ENCODE measurements at regions of chr19 and their contacts with region 1.

Region 1: DNA sequence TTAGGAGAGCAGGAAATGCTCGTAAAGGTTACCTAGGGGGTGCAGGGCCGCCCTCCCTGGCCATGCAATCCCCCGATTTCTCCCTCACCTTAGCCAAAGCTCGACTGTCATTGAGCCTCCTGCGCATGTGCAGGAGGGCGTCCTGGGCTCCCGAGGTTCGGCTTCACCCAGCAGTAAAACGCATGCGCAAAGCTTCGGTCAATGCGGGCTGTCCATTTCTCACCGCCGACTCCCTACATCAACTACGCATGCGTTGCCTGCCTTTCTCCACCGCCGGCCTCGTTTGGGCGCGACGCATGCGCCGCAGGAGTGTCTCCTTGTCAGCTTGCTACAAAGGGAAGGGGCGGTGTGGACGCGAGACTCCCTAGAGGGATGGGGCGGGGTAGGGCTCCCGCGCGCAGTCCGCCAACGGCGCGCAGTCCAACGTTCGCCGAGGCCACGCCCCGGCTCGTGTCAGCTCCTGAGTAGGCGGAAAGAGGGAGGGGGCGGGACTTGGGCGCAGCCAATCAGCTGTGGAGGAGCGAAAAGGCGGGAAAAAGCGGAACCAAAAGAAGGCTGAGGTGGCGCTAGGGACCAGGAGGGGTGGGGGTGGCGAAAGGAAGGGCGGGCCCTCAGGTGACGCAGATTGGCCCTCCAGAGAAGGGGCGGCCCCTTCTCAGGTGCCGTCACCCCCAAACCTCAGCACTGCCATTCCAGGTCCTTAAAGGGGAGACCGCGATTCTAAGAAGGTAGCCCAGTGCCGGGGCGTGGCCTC is at the starts of genes SYNGR4 and TMEM143:
- DNase-seq: peak; percentile 100
- H3K4me3 ChIP-seq: peak within 1 kb of the TSS; percentile 46
- H3K27ac ChIP-seq: peak within 1 kb of the TSS; percentile 82
- H3K4me1 ChIP-seq: peaks cover 9% of the 10 kb centered on the region
- H3K27me3 ChIP-seq: no peaks in the 10 kb centered on the region
- CTCF ChIP-seq: no peak
- total RNA-seq, gene SYNGR4: 0.50 TPM in 1 of 2 replicates, not detected in the other
- total RNA-seq, gene TMEM143: 7.5 and 7.9 TPM in 2 replicates

Region 2: GRCh38 chr19:48391107-48391986 is 27.4 kb after region 1 on chr19 and contains the start of gene KDELR1:
- CTCF ChIA-PET with region 1: interaction called, 15 read pairs
- POLR2A ChIA-PET with region 1: no interaction called
- intact Hi-C with region 1: no loop called
- DNase-seq: peak; percentile 79
- H3K4me3 ChIP-seq: peak within 1 kb of the TSS; percentile 100
- H3K27ac ChIP-seq: peak within 1 kb of the TSS; percentile 91
- H3K4me1 ChIP-seq: peaks cover 39% of the 10 kb centered on the region
- H3K27me3 ChIP-seq: no peaks in the 10 kb centered on the region
- CTCF ChIP-seq: peak; percentile 96
- total RNA-seq, gene KDELR1: 197 and 200 TPM in 2 replicates

Region 3: DNA sequence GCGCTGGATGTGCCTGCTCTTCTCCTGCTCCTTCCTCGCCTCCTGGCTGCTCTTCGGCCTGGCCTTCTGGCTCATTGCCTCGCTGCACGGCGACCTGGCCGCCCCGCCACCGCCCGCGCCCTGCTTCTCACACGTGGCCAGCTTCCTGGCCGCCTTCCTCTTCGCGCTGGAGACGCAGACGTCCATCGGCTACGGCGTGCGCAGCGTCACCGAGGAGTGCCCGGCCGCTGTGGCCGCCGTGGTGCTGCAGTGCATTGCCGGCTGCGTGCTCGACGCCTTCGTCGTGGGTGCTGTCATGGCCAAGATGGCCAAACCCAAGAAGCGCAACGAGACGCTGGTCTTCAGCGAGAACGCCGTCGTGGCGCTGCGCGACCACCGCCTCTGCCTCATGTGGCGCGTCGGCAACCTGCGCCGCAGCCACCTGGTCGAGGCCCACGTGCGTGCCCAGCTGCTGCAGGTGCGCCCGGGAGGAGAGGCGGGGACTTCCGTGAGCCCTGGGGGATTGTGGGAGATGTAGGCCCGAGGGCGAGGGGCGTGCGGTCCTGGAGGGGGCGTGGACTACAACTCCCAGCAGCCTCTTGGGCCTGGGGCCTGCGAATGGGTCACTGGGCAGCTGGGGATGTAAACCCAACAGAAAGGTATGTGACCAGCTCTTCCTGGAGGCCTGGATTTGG is 98.1 kb after region 1 on chr19:
- CTCF ChIA-PET with region 1: interaction called, 11 read pairs
- POLR2A ChIA-PET with region 1: no interaction called
- intact Hi-C with region 1: no loop called
- DNase-seq: no peak
- H3K4me3 ChIP-seq: no peak overlapping the region
- H3K27ac ChIP-seq: no peak overlapping the region
- H3K4me1 ChIP-seq: peaks cover 3% of the 10 kb centered on the region
- H3K27me3 ChIP-seq: no peaks in the 10 kb centered on the region
- CTCF ChIP-seq: no peak

Region 4: DNA sequence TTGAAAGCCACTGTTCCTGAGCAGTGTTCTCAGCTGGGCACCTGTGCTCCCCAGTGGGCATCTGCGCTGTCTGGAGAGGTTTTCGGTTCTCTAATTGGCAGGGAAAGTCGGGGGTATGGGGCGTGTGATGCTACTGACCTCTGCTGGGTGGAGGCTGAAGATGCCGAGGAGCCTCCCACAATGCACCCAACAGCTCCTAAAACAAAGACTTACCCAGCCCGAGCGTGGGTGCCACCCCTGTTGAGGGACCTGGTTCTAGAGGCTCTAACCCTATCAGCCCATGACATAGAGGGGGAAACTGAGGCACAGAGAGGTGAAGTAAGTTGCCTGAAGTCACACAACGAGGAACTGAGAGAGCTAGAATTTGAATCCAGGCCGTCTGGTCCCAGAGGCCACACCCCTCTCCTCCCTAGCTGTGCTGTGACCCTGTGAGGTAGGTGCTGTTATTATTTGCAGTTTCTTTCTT is 244.8 kb after region 1 on chr19:
- CTCF ChIA-PET with region 1: interaction called, 15 read pairs
- POLR2A ChIA-PET with region 1: no interaction called
- intact Hi-C with region 1: no loop called
- DNase-seq: peak; percentile 69
- H3K4me3 ChIP-seq: no peak overlapping the region
- H3K27ac ChIP-seq: no peak overlapping the region
- H3K4me1 ChIP-seq: no peaks in the 10 kb centered on the region
- H3K27me3 ChIP-seq: no peaks in the 10 kb centered on the region
- CTCF ChIP-seq: peak; percentile 68

Region 5: GRCh38 chr19:48780631-48781391 is 416.8 kb after region 1 on chr19:
- CTCF ChIA-PET with region 1: no interaction called
- POLR2A ChIA-PET with region 1: interaction called, 10 read pairs
- intact Hi-C with region 1: no loop called
- DNase-seq: no peak
- H3K4me3 ChIP-seq: no peak overlapping the region
- H3K27ac ChIP-seq: no peak overlapping the region
- H3K4me1 ChIP-seq: no peaks in the 10 kb centered on the region
- H3K27me3 ChIP-seq: no peaks in the 10 kb centered on the region
- CTCF ChIP-seq: no peak